ENCODE measurements at regions of chr15 and their contacts with region 1.

Region 1: DNA sequence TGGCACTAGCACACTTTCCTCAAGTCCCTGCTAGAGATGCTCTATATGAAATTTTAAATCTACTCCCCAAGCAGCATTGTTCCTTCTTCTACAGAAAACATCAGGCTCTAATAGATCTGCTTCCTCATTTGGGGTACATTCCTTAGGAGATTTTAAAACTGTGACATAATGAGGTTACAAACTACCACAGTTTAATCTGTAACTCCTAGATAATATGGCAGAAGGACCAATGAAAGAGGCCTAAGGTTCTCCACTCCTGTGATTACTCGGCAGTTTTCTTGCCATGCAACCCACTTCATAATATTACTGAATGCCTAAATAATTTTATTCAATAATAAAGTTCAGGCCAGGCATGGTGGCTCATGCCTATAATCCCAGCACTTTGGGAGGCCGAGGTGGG is 16.1 kb downstream of the ZNF106 start:
- DNase-seq: no peak
- H3K4me3 ChIP-seq: no peak overlapping the region
- H3K27ac ChIP-seq: peak overlapping the region; percentile 25 to 62
- H3K4me1 ChIP-seq: peaks cover 0 to 14% of the 10 kb centered on the region in 2 donors
- H3K27me3 ChIP-seq: no peaks in the 10 kb centered on the region
- CTCF ChIP-seq: no peak

Region 2: GRCh38 chr15:42207674-42208579 is 266.9 kb before region 1 on chr15 and contains the start of gene VPS39:
- intact Hi-C with region 1: loop called (anchors 5 kb)
- DNase-seq: peak; percentile 53 to 93
- H3K4me3 ChIP-seq: peak within 1 kb of the TSS; percentile 72 to 99
- H3K27ac ChIP-seq: peak within 1 kb of the TSS; percentile 83
- H3K4me1 ChIP-seq: peaks cover 3 to 15% of the 10 kb centered on the region in 2 donors
- H3K27me3 ChIP-seq: no peaks in the 10 kb centered on the region
- CTCF ChIP-seq: no peak
- total RNA-seq, gene VPS39: 91.9 TPM

Region 3: GRCh38 chr15:42273102-42273899 is 201.5 kb before region 1 on chr15 and contains the starts of genes GANC and TMEM87A:
- intact Hi-C with region 1: loop called (anchors 5 kb)
- DNase-seq: peak; percentile 93 to 99
- H3K4me3 ChIP-seq: peak within 1 kb of the TSS; percentile 74 to 89
- H3K27ac ChIP-seq: peak within 1 kb of the TSS; percentile 99 to 100
- H3K4me1 ChIP-seq: peaks cover 9 to 40% of the 10 kb centered on the region in 2 donors
- H3K27me3 ChIP-seq: no peaks in the 10 kb centered on the region
- CTCF ChIP-seq: no peak
- total RNA-seq, gene GANC: 22.9 TPM
- total RNA-seq, gene TMEM87A: 25.4 TPM

Region 4: GRCh38 chr15:42344763-42345162 is 130.1 kb before region 1 on chr15:
- intact Hi-C with region 1: loop called (anchors 5 kb)
- DNase-seq: no peak
- H3K4me3 ChIP-seq: no peak overlapping the region
- H3K27ac ChIP-seq: peak overlapping the region; percentile 4 to 45
- H3K4me1 ChIP-seq: no peaks in the 10 kb centered on the region
- H3K27me3 ChIP-seq: no peaks in the 10 kb centered on the region
- CTCF ChIP-seq: no peak

Region 5: GRCh38 chr15:42457445-42458442 is 17.1 kb before region 1 on chr15:
- intact Hi-C with region 1: loop called (anchors 1 kb)
- DNase-seq: peak; percentile 13 to 92
- H3K4me3 ChIP-seq: peak overlapping the region; percentile 38 to 50
- H3K27ac ChIP-seq: peak overlapping the region; percentile 84 to 90
- H3K4me1 ChIP-seq: peaks cover 4 to 20% of the 10 kb centered on the region in 2 donors
- H3K27me3 ChIP-seq: no peaks in the 10 kb centered on the region
- CTCF ChIP-seq: no peak

Measured in ascending aorta (tissue), 2 donors.